ENCODE measurements at regions of chr3 and their contacts with region 1.

Region 1: GRCh38 chr3:79361748-79362378 is 405.9 kb downstream of the ROBO1 start:
- DNase-seq: no peak
- ATAC-seq: no peak
- H3K4me3 ChIP-seq: peak overlapping the region; percentile 10
- H3K27ac ChIP-seq: no peak overlapping the region
- H3K4me1 ChIP-seq: no peaks in the 10 kb centered on the region
- H3K27me3 ChIP-seq: no peaks in the 10 kb centered on the region

Region 2: GRCh38 chr3:79086514-79086913 is 275.3 kb before region 1 on chr3:
- intact Hi-C with region 1: loop called in 3 of 4 experiments (anchors 5 to 10 kb)
- DNase-seq: no peak
- ATAC-seq: no peak
- H3K4me3 ChIP-seq: no peak overlapping the region
- H3K27ac ChIP-seq: no peak overlapping the region
- H3K4me1 ChIP-seq: no peaks in the 10 kb centered on the region
- H3K27me3 ChIP-seq: no peaks in the 10 kb centered on the region

Region 3: DNA sequence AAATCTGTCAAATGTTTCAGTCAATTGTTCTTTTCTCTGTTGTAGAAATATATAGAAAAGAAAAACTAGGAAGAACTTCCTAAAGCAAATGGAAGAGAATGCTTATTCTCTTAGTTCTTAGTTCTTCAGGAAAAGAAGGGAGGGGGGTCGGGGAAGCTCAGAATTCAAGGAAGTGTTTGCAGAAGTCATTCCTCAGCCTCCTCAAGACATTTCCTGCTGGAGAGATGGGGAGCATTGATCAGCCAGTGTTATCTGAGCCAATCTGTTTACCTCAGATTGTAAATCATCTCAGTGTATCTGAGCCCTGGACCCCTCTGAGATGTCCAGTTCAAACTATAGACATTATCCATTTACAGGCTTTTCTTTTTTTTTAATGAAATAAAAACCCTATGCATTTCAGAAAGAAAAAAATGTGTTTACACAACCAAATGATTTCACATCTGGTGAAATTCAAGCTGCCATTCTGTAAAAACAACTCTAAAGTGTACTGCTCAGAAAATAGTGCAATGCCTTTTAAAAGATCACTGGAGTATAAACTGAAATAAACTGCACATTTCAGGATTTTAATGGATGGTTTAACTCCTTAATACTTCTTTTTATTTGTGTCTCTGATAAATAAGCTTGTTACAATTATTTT is 54.8 kb before region 1 on chr3:
- intact Hi-C with region 1: loop called in 1 of 4 experiments (anchors 10 kb)
- DNase-seq: no peak
- ATAC-seq: no peak
- H3K4me3 ChIP-seq: no peak overlapping the region
- H3K27ac ChIP-seq: no peak overlapping the region
- H3K4me1 ChIP-seq: no peaks in the 10 kb centered on the region
- H3K27me3 ChIP-seq: no peaks in the 10 kb centered on the region

Region 4: DNA sequence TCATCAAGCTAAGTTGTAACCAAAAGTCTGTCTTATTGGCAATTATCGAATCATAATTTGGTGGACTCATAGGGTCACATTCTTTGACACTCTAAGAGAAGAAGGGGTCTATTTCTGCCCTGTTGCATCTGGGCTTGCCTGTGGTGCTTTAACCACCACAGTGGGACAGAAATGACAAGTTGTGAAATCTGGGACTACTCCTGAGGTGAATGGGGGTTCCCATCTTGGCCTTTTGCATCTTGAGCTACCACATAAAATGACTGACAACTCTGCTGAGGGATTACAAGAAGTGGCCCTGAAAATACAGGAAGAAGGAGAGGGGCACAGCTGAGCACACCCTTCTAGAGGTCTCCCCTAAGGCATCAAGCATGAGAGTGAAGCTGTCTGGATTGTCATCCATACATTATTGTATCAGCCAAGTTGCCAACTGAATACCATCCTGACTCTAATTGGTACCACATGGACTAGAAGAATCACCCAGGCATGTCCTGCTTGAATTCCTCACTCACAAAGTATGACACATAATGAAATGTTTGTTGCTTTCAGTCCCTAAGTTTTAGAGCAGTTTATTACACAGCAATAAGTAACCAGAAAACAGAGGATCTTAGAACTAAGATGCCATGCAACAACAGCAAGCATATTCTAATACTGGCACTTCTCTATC is 99.4 kb after region 1 on chr3:
- intact Hi-C with region 1: no loop called
- DNase-seq: no peak
- ATAC-seq: no peak
- H3K4me3 ChIP-seq: no peak overlapping the region
- H3K27ac ChIP-seq: no peak overlapping the region
- H3K4me1 ChIP-seq: no peaks in the 10 kb centered on the region
- H3K27me3 ChIP-seq: no peaks in the 10 kb centered on the region

Region 5: DNA sequence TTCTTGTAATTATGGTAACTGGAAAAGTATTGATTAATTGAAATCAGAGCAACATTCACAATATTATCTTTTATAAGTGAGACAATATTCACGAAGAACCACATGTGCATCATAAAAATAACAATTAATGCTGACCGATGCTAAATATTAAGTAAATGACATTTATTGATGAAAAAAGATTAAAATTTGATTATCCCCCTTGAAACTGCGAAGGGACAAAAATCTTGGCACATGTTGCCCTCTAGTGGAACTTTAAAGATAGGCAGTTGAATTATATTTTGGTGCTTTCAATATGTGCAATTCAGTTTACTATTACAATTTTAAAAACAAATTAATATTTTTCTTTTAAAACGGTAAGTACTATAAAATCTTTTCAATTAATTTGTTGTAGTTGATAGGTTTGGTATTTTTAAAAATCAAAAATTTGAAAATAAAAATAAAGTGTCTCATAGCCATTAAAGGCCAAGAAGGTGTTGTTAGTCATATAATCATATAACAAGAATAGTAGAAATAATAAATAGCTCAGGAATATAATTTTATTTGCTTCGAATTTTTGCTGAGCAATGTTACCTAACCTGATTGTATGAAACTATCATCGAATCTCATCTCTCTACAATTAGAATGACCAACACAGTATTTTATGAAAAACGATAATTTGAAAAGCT is 135.7 kb after region 1 on chr3:
- intact Hi-C with region 1: loop called in 1 of 4 experiments (anchors 10 kb)
- DNase-seq: no peak
- ATAC-seq: no peak
- H3K4me3 ChIP-seq: no peak overlapping the region
- H3K27ac ChIP-seq: no peak overlapping the region
- H3K4me1 ChIP-seq: no peaks in the 10 kb centered on the region
- H3K27me3 ChIP-seq: no peaks in the 10 kb centered on the region

Region 6: GRCh38 chr3:79551995-79552394 is 190.1 kb after region 1 on chr3:
- intact Hi-C with region 1: no loop called
- DNase-seq: no peak
- ATAC-seq: no peak
- H3K4me3 ChIP-seq: no peak overlapping the region
- H3K27ac ChIP-seq: no peak overlapping the region
- H3K4me1 ChIP-seq: no peaks in the 10 kb centered on the region
- H3K27me3 ChIP-seq: no peaks in the 10 kb centered on the region

Measured in right cardiac atrium (tissue), 5 donors.